B cell (primary cell): ENCODE measurements at regions of chr15 and their contacts with region 1.

Region 1: DNA sequence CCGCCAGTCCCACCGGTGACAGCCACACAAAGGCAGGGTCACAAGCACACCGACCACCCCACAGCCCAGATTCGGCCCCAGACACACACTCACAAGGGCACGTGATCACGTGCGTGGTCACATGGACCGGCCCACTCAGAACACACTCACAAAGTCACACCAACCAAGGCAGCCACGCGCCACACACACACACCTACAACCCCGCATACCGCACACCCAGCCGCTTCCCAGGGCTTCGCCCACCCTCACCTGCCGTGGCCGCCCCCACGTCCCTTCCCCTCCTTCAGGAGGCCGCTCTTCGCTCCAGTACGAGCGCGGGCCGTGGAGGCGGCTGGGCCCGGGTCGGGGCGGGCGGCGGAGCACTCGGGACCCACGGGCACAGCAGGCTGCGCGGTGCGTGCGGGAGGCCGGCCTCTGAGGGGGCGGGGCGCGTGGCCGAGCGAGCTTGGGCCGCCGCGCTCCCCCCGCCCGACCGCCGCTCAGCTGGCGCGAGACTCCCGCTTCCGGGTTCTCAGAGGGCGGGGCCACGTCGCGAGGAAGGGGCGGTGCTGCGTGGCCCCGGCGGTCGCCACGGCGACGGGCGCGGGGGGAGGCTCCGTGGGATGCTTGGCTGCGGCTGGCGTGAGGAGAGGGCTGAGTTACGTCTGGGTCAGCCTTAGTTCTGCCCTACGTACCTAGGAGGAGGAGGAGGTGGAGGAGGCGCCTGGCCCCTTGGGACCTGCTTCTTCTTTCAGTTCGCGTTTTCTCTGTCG is at the start of gene SPG21:
- DNase-seq: peak; percentile 99
- ATAC-seq: peak; percentile 95
- H3K4me3 ChIP-seq: peak within 1 kb of the TSS; percentile 70 to 97 (median 88)
- H3K4me3 Mint-ChIP-seq: peak within 1 kb of the TSS; percentile 97
- H3K27ac ChIP-seq: peak within 1 kb of the TSS; percentile 83 to 94
- H3K27ac Mint-ChIP-seq: peak within 1 kb of the TSS; percentile 96
- H3K4me1 ChIP-seq: peaks cover 28 to 31% of the 10 kb centered on the region in 2 donors
- H3K4me1 Mint-ChIP-seq: peaks cover 48% of the 10 kb centered on the region
- H3K27me3 ChIP-seq: no peaks in the 10 kb centered on the region
- H3K27me3 Mint-ChIP-seq: no peaks in the 10 kb centered on the region
- CTCF ChIP-seq: no peak
- total RNA-seq, gene SPG21: 94.4 and 95.5 TPM in 2 replicates

Region 2: GRCh38 chr15:64702816-64703646 is 286.6 kb before region 1 on chr15:
- CTCF ChIA-PET with region 1: interaction called, 3 read pairs
- POLR2A ChIA-PET with region 1: no interaction called
- intact Hi-C with region 1: loop called (anchors 1 kb)
- DNase-seq: peak; percentile 93
- ATAC-seq: peak; percentile 96
- H3K4me3 ChIP-seq: peak overlapping the region; percentile 73 to 88 (median 87)
- H3K4me3 Mint-ChIP-seq: peak overlapping the region; percentile 95
- H3K27ac ChIP-seq: peak overlapping the region; percentile 65 to 83
- H3K27ac Mint-ChIP-seq: peak overlapping the region; percentile 94
- H3K4me1 ChIP-seq: peaks cover 45 to 46% of the 10 kb centered on the region in 2 donors
- H3K4me1 Mint-ChIP-seq: peaks cover 56% of the 10 kb centered on the region
- H3K27me3 ChIP-seq: no peaks in the 10 kb centered on the region
- H3K27me3 Mint-ChIP-seq: no peaks in the 10 kb centered on the region
- CTCF ChIP-seq: no peak

Region 3: GRCh38 chr15:64841258-64842095 is 148.1 kb before region 1 on chr15 and contains the start of gene PLEKHO2:
- CTCF ChIA-PET with region 1: interaction called, 3 read pairs
- POLR2A ChIA-PET with region 1: interaction called, 7 read pairs
- intact Hi-C with region 1: loop called (anchors 5 kb)
- DNase-seq: peak; percentile 90
- ATAC-seq: peak; percentile 76
- H3K4me3 ChIP-seq: peak within 1 kb of the TSS; percentile 67 to 88 (median 72)
- H3K4me3 Mint-ChIP-seq: peak within 1 kb of the TSS; percentile 91
- H3K27ac ChIP-seq: peak within 1 kb of the TSS; percentile 65 to 85
- H3K27ac Mint-ChIP-seq: peak within 1 kb of the TSS; percentile 84
- H3K4me1 ChIP-seq: peaks cover 45 to 53% of the 10 kb centered on the region in 2 donors
- H3K4me1 Mint-ChIP-seq: peaks cover 58% of the 10 kb centered on the region
- H3K27me3 ChIP-seq: no peaks in the 10 kb centered on the region
- H3K27me3 Mint-ChIP-seq: no peaks in the 10 kb centered on the region
- CTCF ChIP-seq: peak; percentile 53
- total RNA-seq, gene PLEKHO2: 23.1 and 25.4 TPM in 2 replicates

Region 4: DNA sequence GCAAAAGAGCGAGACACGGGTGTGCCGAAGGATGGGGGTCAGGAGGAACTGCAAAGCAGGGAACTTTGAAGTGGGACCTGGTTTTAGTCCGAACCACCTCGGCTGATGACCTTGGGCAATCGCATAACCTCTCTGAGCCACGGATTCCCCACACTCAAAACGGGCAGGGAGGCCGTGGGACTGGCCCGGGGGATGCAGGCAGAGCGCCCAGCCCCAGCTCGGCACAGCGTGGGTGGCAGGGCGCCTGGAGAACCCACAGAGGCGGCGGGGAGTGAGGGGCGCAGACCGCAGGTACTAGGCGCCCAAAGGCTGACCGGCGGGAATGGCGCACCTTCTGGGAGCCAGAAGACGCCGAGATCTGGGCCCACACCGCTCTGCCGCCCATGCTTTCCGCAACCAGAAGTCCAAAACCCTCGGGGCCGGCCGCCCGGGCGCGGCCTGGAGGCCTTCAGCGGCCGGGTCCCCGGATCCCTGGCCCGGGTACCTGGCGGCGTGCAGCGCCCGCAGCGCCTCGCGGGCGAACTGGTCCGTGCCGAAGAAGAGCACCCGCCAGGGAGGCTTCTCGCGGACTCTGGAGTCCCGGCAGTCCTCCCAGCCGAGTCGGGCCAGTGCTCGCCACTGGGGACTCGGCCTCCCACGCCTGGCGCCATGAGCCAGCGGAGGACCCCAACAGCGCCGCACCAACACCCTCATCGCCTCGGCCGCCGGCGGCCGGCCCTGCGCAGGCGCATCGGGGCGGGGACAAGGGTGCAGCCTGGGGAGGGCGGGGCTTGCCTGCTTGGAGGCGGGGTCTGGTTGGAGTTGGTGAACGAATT is 39.5 kb after region 1 on chr15 and contains the start of gene MTFMT:
- CTCF ChIA-PET with region 1: no interaction called
- POLR2A ChIA-PET with region 1: no interaction called
- intact Hi-C with region 1: loop called (anchors 1 kb)
- DNase-seq: peak; percentile 90
- ATAC-seq: peak; percentile 95
- H3K4me3 ChIP-seq: peak within 1 kb of the TSS; percentile 64 to 86 (median 80)
- H3K4me3 Mint-ChIP-seq: peak within 1 kb of the TSS; percentile 87
- H3K27ac ChIP-seq: peak within 1 kb of the TSS in 1 of 2 donors; percentile 68
- H3K27ac Mint-ChIP-seq: peak within 1 kb of the TSS; percentile 78
- H3K4me1 ChIP-seq: peaks cover 20 to 26% of the 10 kb centered on the region in 2 donors
- H3K4me1 Mint-ChIP-seq: peaks cover 27% of the 10 kb centered on the region
- H3K27me3 ChIP-seq: peaks cover 0 to 3% (median 0%) of the 10 kb centered on the region in 4 experiments
- H3K27me3 Mint-ChIP-seq: peaks cover 6% of the 10 kb centered on the region
- CTCF ChIP-seq: no peak
- total RNA-seq, gene MTFMT: 14.3 and 15.5 TPM in 2 replicates

Region 5: GRCh38 chr15:65133548-65134200 is 144.1 kb after region 1 on chr15 and contains the start of gene PDCD7:
- CTCF ChIA-PET with region 1: no interaction called
- POLR2A ChIA-PET with region 1: no interaction called
- intact Hi-C with region 1: loop called (anchors 1 kb)
- DNase-seq: peak; percentile 92
- ATAC-seq: peak; percentile 93
- H3K4me3 ChIP-seq: peak within 1 kb of the TSS; percentile 55 to 90 (median 67)
- H3K4me3 Mint-ChIP-seq: peak within 1 kb of the TSS; percentile 93
- H3K27ac ChIP-seq: peak within 1 kb of the TSS; percentile 53 to 88
- H3K27ac Mint-ChIP-seq: peak within 1 kb of the TSS; percentile 95
- H3K4me1 ChIP-seq: peaks cover 13 to 19% of the 10 kb centered on the region in 2 donors
- H3K4me1 Mint-ChIP-seq: peaks cover 28% of the 10 kb centered on the region
- H3K27me3 ChIP-seq: no peaks in the 10 kb centered on the region
- H3K27me3 Mint-ChIP-seq: no peaks in the 10 kb centered on the region
- CTCF ChIP-seq: no peak
- total RNA-seq, gene PDCD7: 43.2 and 47.0 TPM in 2 replicates